Panc1 (cell line): ENCODE measurements at regions of chr1 and their contacts with region 1.

Region 1: GRCh38 chr1:39196244-39197215 is 8.0 kb upstream of the MACF1 start:
- DNase-seq: no peak
- ATAC-seq: no peak
- H3K4me3 ChIP-seq: no peak overlapping the region
- H3K27ac ChIP-seq: peak overlapping the region; percentile 97
- H3K4me1 ChIP-seq: peaks cover 56% of the 10 kb centered on the region
- H3K27me3 ChIP-seq: no peaks in the 10 kb centered on the region
- CTCF ChIP-seq: no peak

Region 2: DNA sequence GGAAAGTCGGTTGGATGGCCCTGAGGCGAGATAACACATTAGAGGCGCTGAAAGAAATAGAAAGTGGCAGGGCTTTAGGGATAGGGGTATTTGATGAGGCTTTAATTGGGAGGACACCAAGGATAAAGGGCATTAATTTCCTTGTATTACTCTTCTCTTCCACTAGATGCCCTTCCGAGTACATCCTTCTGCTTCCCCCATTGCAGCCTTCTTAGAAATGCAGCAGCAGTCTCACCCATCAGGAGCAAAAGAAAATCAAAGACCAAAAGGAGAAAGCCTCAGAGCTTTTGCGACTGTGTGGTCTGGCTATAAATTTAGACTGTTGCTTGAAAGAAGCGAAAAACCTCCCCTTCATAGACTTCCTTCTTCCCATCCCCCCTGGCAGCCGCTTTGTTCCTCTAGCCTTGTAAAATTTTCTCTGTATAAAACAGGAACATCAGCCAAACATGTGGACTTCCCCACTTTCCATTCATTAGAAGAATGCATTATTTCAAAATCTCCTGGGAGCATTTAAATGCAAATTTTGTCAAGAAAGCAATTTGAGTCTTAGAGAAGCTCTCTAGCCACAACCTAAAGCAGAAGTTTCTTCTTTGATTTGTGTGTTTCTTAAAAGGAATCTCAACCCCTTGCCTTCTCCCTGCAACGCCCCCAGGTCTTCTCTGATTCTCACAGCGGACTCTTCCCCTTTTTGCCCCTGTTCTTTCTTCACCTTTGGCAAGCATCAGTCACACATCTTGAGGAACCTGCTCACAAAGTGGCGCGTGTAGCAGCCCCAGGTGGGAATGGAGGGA is 93.8 kb before region 1 on chr1:
- CTCF ChIA-PET with region 1: interaction called, 9 read pairs
- POLR2A ChIA-PET with region 1: no interaction called
- in situ Hi-C with region 1: no loop called
- intact Hi-C with region 1: loop called (anchors 2 kb)
- DNase-seq: no peak
- ATAC-seq: peak; percentile 59
- H3K4me3 ChIP-seq: peak overlapping the region; percentile 6 to 67; a peak in 3 of 4 replicates
- H3K27ac ChIP-seq: peak overlapping the region; percentile 99
- H3K4me1 ChIP-seq: peaks cover 20% of the 10 kb centered on the region
- H3K27me3 ChIP-seq: no peaks in the 10 kb centered on the region
- CTCF ChIP-seq: peak; percentile 89

Region 3: GRCh38 chr1:39139723-39140360 is 56.7 kb before region 1 on chr1:
- CTCF ChIA-PET with region 1: no interaction called
- POLR2A ChIA-PET with region 1: interaction called, 21 read pairs
- in situ Hi-C with region 1: no loop called
- intact Hi-C with region 1: no loop called
- DNase-seq: no peak
- ATAC-seq: no peak
- H3K4me3 ChIP-seq: no peak overlapping the region
- H3K27ac ChIP-seq: no peak overlapping the region; the same call in 1 of the 2 replicates
- H3K4me1 ChIP-seq: peaks cover 32% of the 10 kb centered on the region
- H3K27me3 ChIP-seq: no peaks in the 10 kb centered on the region
- CTCF ChIP-seq: no peak

Region 4: DNA sequence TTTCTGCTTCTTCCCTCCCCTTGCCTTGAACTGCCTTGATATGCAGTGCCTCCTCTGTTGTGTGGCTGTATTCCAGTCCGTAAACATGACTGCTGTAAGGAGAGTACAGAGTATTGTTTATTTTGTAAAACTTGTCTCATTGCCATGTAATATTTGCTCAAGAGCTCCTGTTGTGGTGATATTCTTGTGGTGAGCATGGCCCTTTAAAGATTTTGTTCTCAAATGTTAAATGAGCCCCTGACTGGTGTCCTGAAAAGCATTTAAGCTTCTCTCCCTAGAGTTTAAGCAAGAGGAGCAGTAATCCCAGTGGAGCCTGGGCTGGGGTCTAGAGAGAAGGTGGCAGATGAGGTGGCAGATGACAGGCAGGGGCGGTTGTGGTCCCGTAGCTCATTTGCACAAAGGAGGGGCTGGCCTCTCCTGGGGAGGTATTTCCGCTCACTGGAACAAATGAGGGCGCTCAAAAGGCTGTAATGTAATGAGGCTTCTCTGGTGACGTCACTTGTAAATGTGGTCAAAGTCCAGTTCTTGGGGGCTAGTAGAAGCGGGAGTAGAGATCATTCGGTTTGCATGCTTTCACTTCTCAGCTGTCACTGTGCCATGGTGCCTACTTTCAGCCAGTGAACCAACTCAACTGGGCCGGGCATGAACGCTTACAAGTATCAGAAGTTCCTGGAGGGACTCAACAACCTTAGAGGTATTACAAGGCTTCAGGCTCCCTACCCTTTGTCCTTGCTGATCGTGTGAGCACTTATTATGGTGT is 38.0 kb before region 1 on chr1:
- CTCF ChIA-PET with region 1: interaction called, 11 read pairs
- POLR2A ChIA-PET with region 1: interaction called, 4 read pairs
- in situ Hi-C with region 1: no loop called
- intact Hi-C with region 1: no loop called
- DNase-seq: peak; percentile 68
- ATAC-seq: peak; percentile 71
- H3K4me3 ChIP-seq: peak overlapping the region; percentile 23 to 35
- H3K27ac ChIP-seq: peak overlapping the region; percentile 90
- H3K4me1 ChIP-seq: peaks cover 76% of the 10 kb centered on the region
- H3K27me3 ChIP-seq: no peaks in the 10 kb centered on the region
- CTCF ChIP-seq: no peak

Region 5: DNA sequence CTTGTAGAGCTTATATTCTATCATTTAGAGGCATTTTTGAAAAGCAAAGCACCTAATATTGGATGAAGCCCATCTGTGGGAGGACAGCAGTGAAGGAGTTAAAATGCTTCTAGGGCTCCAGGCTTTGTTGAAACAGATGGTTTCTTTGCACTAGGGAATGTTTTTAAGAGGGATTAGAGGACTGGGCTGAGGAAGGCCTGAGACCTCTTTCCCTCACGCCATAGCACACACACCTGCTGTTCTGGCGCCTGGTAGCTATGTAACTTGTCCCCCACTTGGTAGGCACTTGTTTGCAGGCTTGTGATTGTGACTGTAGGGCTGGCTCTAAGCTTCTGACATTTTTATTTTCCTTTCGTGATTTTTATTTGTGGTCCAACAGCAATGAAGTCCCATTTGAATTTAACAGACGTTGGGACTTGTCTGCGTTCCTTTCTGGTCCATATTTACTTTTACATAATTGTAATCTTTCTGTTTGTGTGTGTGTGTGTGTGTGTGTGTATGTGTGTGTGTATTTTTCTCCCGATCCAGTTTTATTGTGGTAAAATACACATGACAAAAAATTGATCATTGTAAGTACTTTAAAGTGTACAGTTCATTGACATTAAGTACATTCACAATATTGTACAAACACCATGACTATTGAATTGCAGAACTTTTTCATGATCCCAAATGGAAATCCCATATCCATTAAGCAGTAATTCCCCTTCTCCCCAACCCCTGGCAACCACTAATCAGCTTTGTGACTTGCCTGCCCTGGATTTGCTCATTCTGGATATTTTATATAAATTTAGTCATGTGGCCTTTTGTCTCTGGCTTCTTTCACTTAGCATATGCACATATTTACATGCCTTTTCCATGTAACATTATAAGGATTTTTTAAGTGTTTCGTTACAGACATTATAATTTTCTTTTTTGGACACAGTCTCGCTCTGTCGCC is 25.5 kb before region 1 on chr1:
- CTCF ChIA-PET with region 1: interaction called, 11 read pairs
- POLR2A ChIA-PET with region 1: interaction called, 3 read pairs
- in situ Hi-C with region 1: no loop called
- intact Hi-C with region 1: no loop called
- DNase-seq: no peak
- ATAC-seq: peak; percentile 50
- H3K4me3 ChIP-seq: peak overlapping the region in 1 of 2 experiments; percentile 5; a peak in 1 of 4 replicates
- H3K27ac ChIP-seq: peak overlapping the region; percentile 97
- H3K4me1 ChIP-seq: peaks cover 75% of the 10 kb centered on the region
- H3K27me3 ChIP-seq: no peaks in the 10 kb centered on the region
- CTCF ChIP-seq: no peak

Region 6: DNA sequence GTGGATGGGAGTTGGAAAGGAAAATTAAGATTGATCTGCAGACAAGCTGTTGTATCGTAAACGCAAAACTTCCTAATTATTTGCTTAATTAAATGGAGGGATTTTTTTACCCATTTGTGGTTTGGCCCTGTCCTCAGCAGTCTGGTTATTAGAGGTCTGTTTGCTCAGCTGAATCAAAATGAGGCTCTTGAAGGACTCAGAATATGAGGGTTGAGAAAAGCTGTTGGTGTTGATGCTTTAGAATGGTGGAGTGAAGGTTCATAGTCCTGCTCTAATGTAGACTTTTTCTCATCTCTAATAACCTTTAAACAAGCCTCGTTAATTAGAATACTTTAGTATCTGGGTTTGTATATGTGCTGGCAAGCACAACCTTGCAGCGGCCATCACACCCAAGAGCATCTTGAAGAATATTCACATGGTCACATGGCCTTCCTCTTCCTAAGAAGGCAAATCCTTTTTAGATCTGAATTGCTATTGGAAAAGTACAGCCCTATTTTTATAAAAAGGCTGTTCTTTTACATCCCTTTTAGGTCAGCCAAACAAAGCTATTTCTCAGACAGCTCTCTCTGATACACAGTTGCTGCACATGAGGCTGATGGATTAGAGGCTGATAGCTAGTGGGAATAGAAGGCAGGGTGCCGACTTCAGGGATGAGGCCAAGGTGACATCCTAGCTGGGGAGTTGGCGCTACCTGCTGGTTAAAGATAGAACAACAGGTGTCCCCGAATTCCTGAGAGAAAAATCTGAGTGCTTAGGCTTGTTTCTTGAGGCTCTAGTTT is 61.8 kb after region 1 on chr1:
- CTCF ChIA-PET with region 1: interaction called, 28 read pairs
- POLR2A ChIA-PET with region 1: interaction called, 6 read pairs
- in situ Hi-C with region 1: no loop called
- intact Hi-C with region 1: loop called (anchors 5 kb)
- DNase-seq: peak; percentile 72
- ATAC-seq: peak; percentile 94
- H3K4me3 ChIP-seq: no peak overlapping the region
- H3K27ac ChIP-seq: peak overlapping the region; percentile 52
- H3K4me1 ChIP-seq: peaks cover 12% of the 10 kb centered on the region
- H3K27me3 ChIP-seq: no peaks in the 10 kb centered on the region
- CTCF ChIP-seq: peak; percentile 93

Region 7: GRCh38 chr1:39282537-39283216 is 86.1 kb after region 1 on chr1:
- CTCF ChIA-PET with region 1: no interaction called
- POLR2A ChIA-PET with region 1: no interaction called
- in situ Hi-C with region 1: no loop called
- intact Hi-C with region 1: no loop called
- DNase-seq: no peak
- ATAC-seq: no peak
- H3K4me3 ChIP-seq: no peak overlapping the region
- H3K27ac ChIP-seq: no peak overlapping the region
- H3K4me1 ChIP-seq: no peaks in the 10 kb centered on the region
- H3K27me3 ChIP-seq: no peaks in the 10 kb centered on the region
- CTCF ChIP-seq: no peak

Region 8: DNA sequence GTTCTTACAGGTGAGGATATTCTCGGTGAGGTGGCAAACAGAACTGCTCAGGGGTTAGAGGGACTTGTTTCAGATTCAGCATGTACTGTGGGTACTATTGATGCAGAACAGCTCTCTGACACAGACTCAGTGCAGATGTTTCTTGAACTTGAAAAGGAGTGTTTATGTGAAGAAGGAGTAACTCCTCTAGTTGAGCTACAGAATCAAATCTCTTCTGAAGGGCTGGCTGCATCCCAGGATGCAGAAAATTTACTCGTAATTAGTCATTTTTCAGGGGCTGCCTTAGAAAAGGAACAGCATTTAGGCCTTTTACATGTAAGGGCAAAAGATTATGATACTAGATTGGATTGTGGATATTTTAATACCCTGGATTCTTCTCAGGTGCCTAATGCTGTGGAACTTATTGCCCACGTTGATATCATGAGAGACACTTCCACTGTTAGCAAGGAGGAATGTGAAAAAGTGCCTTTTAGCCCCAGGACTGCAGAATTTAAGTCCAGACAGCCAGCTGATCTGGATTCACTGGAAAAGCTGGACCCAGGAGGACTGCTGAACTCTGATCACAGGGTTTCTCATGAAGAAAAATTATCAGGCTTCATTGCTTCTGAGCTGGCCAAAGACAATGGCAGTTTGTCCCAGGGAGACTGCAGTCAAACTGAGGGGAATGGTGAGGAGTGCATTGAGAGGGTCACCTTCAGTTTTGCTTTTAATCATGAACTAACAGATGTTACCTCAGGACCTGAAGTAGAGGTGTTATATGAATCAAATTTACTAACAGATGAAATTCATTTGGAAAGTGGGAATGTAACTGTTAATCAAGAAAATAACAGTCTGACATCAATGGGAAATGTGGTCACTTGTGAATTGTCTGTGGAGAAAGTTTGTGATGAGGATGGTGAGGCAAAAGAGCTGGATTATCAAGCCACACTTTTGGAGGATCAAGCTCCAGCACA is 215.3 kb after region 1 on chr1:
- CTCF ChIA-PET with region 1: no interaction called
- POLR2A ChIA-PET with region 1: no interaction called
- in situ Hi-C with region 1: no loop called
- intact Hi-C with region 1: no loop called
- DNase-seq: no peak
- ATAC-seq: no peak
- H3K4me3 ChIP-seq: peak overlapping the region; percentile 71 to 95
- H3K27ac ChIP-seq: peak overlapping the region; percentile 95
- H3K4me1 ChIP-seq: peaks cover 70% of the 10 kb centered on the region
- H3K27me3 ChIP-seq: no peaks in the 10 kb centered on the region
- CTCF ChIP-seq: no peak

Region 9: DNA sequence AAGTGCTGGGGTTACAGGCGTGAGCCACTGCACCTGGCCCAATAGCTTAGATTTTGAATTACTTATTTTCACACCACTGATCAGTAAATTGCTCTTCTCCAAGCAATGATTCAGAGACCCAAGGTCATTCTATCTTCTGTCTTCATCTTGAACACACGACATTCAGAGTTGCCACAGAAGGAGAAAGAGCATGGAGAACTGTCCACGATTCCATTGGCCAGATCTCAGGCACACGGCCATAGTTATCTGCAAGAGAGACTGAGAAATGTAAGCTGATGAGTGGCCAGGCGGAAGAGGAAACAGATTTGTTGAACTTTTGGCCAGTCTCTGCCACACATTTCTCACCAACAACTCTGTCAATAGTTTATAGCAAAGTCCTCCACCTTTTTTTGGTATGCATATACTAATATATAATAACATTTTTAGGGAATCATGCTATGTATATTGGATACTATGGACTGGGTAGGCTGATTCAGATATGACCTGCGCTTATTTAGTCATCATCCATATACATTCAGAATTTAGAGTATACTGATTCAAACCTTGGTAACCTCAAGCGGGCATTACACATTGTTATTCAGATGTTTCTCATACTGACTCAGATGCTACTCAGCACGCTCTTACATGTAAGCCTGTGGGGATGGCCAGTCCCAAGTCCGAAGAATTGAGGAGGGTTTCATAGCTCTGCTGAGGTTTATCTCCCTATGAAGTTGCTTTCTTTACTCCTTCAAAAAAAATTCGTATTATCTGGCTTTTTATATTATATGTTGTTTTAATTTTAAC is 818.5 kb after region 1 on chr1:
- CTCF ChIA-PET with region 1: interaction called, 11 read pairs
- POLR2A ChIA-PET with region 1: no interaction called
- in situ Hi-C with region 1: no loop called
- intact Hi-C with region 1: no loop called
- DNase-seq: peak; percentile 94
- ATAC-seq: peak; percentile 95
- H3K4me3 ChIP-seq: no peak overlapping the region
- H3K27ac ChIP-seq: no peak overlapping the region
- H3K4me1 ChIP-seq: no peaks in the 10 kb centered on the region
- H3K27me3 ChIP-seq: no peaks in the 10 kb centered on the region
- CTCF ChIP-seq: no peak